CD8-positive, alpha-beta memory T cell (primary cell): ENCODE measurements at regions of chr2 and their contacts with region 1.

Region 1: GRCh38 chr2:157327621-157328500 is 2.2 kb upstream of the ERMN start:
- DNase-seq: peak; percentile 71 to 89 (median 76)
- H3K4me3 ChIP-seq: no peak overlapping the region
- H3K4me3 Mint-ChIP-seq: peak overlapping the region in 6 of 7 donors; percentile 60 to 87 (median 70)
- H3K27ac ChIP-seq: no peak overlapping the region
- H3K27ac Mint-ChIP-seq: peak overlapping the region in 7 of 8 donors; percentile 35 to 90 (median 85)
- H3K4me1 ChIP-seq: peaks cover 41% of the 10 kb centered on the region
- H3K4me1 Mint-ChIP-seq: peaks cover 47 to 57% (median 55%) of the 10 kb centered on the region in 3 donors
- H3K27me3 ChIP-seq: no peaks in the 10 kb centered on the region
- H3K27me3 Mint-ChIP-seq: no peaks in the 10 kb centered on the region

Region 2: GRCh38 chr2:157067562-157067961 is 260.3 kb before region 1 on chr2:
- CTCF ChIA-PET with region 1: no interaction called
- POLR2A ChIA-PET with region 1: no interaction called
- DNase-seq: no peak
- H3K4me3 ChIP-seq: no peak overlapping the region
- H3K4me3 Mint-ChIP-seq: no peak overlapping the region
- H3K27ac ChIP-seq: no peak overlapping the region
- H3K27ac Mint-ChIP-seq: no peak overlapping the region
- H3K4me1 ChIP-seq: no peaks in the 10 kb centered on the region
- H3K4me1 Mint-ChIP-seq: no peaks in the 10 kb centered on the region
- H3K27me3 ChIP-seq: no peaks in the 10 kb centered on the region
- H3K27me3 Mint-ChIP-seq: peaks cover 3 to 11% of the 10 kb centered on the region in 2 donors

Region 3: GRCh38 chr2:157302492-157303099 is 25.3 kb before region 1 on chr2:
- CTCF ChIA-PET with region 1: interaction called, 59 read pairs
- POLR2A ChIA-PET with region 1: no interaction called
- DNase-seq: peak in 4 of 5 donors; percentile 14 to 56 (median 54)
- H3K4me3 ChIP-seq: no peak overlapping the region
- H3K4me3 Mint-ChIP-seq: no peak overlapping the region
- H3K27ac ChIP-seq: no peak overlapping the region
- H3K27ac Mint-ChIP-seq: no peak overlapping the region
- H3K4me1 ChIP-seq: no peaks in the 10 kb centered on the region
- H3K4me1 Mint-ChIP-seq: peaks cover 2 to 11% (median 10%) of the 10 kb centered on the region in 3 donors
- H3K27me3 ChIP-seq: no peaks in the 10 kb centered on the region
- H3K27me3 Mint-ChIP-seq: peaks cover 4% of the 10 kb centered on the region in 2 donors

Region 4: GRCh38 chr2:157404363-157404762 is 76.5 kb after region 1 on chr2:
- CTCF ChIA-PET with region 1: interaction called, 30 read pairs
- POLR2A ChIA-PET with region 1: interaction called, 6 read pairs
- DNase-seq: peak; percentile 42 to 89 (median 82)
- H3K4me3 ChIP-seq: peak overlapping the region; percentile 35
- H3K4me3 Mint-ChIP-seq: peak overlapping the region; percentile 30 to 77 (median 53)
- H3K27ac ChIP-seq: peak overlapping the region; percentile 71
- H3K27ac Mint-ChIP-seq: peak overlapping the region; percentile 94 to 99 (median 98)
- H3K4me1 ChIP-seq: peaks cover 52% of the 10 kb centered on the region
- H3K4me1 Mint-ChIP-seq: peaks cover 69 to 80% (median 78%) of the 10 kb centered on the region in 3 donors
- H3K27me3 ChIP-seq: no peaks in the 10 kb centered on the region
- H3K27me3 Mint-ChIP-seq: no peaks in the 10 kb centered on the region

Region 5: GRCh38 chr2:157433394-157433793 is 105.5 kb after region 1 on chr2:
- CTCF ChIA-PET with region 1: interaction called, 45 read pairs
- POLR2A ChIA-PET with region 1: interaction called, 21 read pairs
- DNase-seq: no peak
- H3K4me3 ChIP-seq: peak overlapping the region; percentile 58
- H3K4me3 Mint-ChIP-seq: peak overlapping the region; percentile 71 to 99 (median 96)
- H3K27ac ChIP-seq: no peak overlapping the region
- H3K27ac Mint-ChIP-seq: peak overlapping the region; percentile 72 to 99 (median 92)
- H3K4me1 ChIP-seq: peaks cover 66% of the 10 kb centered on the region
- H3K4me1 Mint-ChIP-seq: peaks cover 86 to 97% (median 88%) of the 10 kb centered on the region in 3 donors
- H3K27me3 ChIP-seq: no peaks in the 10 kb centered on the region
- H3K27me3 Mint-ChIP-seq: no peaks in the 10 kb centered on the region

Region 6: DNA sequence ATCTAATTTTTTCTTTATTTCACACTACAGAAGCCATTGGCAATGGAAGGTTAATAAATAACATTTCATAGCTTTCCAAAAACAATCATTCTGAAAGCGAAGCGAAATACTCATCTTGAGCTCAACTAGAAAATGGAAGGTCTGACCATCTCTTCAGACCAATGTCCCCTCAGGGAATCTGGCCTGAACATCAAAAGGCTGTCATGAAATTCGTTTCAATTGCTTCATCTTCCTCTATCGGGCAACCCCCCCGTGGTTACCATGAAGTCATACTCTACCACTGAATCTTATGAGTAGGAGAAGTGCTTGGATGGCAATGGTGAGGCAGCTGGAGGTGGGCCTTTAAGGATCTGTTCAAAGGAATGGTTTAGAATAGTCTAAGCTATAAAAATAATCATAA is 138.9 kb after region 1 on chr2:
- CTCF ChIA-PET with region 1: interaction called, 68 read pairs
- POLR2A ChIA-PET with region 1: interaction called, 3 read pairs
- DNase-seq: no peak
- H3K4me3 ChIP-seq: no peak overlapping the region
- H3K4me3 Mint-ChIP-seq: no peak overlapping the region
- H3K27ac ChIP-seq: no peak overlapping the region
- H3K27ac Mint-ChIP-seq: peak overlapping the region in 3 of 8 donors; percentile 31 to 80 (median 37)
- H3K4me1 ChIP-seq: peaks cover 65% of the 10 kb centered on the region
- H3K4me1 Mint-ChIP-seq: peaks cover 62 to 82% (median 79%) of the 10 kb centered on the region in 3 donors
- H3K27me3 ChIP-seq: no peaks in the 10 kb centered on the region
- H3K27me3 Mint-ChIP-seq: no peaks in the 10 kb centered on the region

Region 7: DNA sequence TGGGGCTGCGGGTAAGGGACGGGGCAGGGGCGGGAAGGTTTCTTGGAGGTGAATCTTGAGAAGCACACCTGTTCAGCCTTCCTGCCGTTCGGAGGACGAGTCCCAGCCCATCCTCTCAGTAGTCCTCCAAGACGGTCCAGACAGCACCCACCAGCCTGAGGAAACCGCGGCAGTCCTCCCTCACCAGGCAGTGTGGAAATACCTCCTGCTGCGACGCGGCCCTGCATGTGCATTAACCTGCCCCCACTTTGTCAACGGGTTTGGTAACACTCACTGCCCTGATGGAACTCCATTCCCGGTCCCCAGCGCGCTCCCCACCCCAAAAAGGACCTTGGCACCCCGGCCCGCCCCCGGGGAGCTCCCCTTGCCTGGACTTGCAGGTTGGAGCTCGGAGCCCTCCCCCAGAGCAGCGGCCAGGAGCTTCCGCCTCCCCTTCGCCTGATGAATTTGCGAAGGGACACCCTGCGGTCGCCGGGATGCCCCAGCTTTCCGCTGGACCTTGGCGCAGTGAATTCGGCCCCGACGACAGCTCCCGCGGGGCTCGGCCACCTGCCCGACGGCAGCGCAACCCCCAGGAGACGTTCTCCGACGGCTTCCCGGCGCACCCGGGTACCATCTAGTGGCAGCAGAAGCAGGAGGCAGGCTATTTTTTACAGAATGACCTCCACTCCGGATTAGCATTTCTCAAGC is 269.3 kb after region 1 on chr2:
- CTCF ChIA-PET with region 1: interaction called, 19 read pairs
- POLR2A ChIA-PET with region 1: no interaction called
- DNase-seq: peak in 4 of 5 donors; percentile 26 to 62 (median 45)
- H3K4me3 ChIP-seq: no peak overlapping the region
- H3K4me3 Mint-ChIP-seq: peak overlapping the region in 6 of 7 donors; percentile 3 to 82 (median 45)
- H3K27ac ChIP-seq: no peak overlapping the region
- H3K27ac Mint-ChIP-seq: peak overlapping the region in 1 of 8 donors; percentile 69
- H3K4me1 ChIP-seq: no peaks in the 10 kb centered on the region
- H3K4me1 Mint-ChIP-seq: peaks cover 6 to 11% (median 9%) of the 10 kb centered on the region in 3 donors
- H3K27me3 ChIP-seq: no peaks in the 10 kb centered on the region
- H3K27me3 Mint-ChIP-seq: peaks cover 25% of the 10 kb centered on the region in 2 donors